A673 (cell line): ENCODE measurements at regions of chr12 and their contacts with region 1.

Region 1: DNA sequence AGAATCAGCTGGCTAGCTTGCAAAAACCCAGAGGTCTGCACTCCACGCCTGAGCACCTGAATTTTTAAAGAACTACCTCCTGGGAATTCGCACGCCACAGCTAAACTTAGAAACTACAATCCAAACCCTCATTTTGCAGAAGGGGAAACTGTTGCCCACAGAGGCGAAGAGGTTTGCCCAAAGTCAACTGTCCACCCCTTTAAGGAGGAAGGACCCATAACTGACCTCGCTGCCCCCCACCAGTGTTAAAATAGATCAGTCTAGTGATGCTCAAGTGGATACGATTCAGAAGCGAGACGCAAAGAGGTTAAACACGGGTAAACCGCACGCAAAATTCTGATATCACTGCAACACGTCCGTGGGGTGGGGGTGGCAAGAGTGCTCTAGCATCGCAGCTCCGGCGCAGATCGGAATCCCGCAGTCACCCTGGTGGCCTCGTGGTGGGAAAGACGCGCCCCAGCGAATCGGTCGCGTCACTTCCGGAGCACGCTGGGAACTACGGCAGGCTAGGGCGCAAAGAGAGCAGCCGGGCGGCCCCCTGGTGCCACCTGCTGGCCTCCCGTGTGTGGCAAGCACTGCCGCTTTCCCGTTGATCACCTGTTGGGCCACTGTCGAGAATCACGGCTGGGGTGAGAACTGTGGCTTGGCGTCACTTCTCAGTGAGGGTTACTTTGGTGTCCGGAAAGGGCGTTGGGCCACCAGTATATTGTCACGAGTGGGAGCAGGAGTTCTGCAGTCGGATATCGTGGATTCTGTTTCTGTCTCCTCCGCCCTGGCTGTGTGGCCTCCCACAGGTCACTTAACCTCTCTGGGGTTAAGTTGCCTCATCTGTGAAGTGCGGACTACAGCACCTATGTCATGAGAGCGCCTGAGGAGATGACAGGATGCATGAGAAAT is at the start of gene ALKBH2:
- DNase-seq: peak; percentile 96
- H3K4me3 ChIP-seq: peak within 1 kb of the TSS; percentile 48
- H3K27ac ChIP-seq: peak within 1 kb of the TSS; percentile 55
- H3K4me1 ChIP-seq: peaks cover 21% of the 10 kb centered on the region
- H3K27me3 ChIP-seq: no peaks in the 10 kb centered on the region
- CTCF ChIP-seq: peak; percentile 98
- total RNA-seq, gene ALKBH2: 40.6 and 44.5 TPM in 2 replicates

Region 2: GRCh38 chr12:108664338-108665258 is 428.7 kb before region 1 on chr12:
- CTCF ChIA-PET with region 1: no interaction called
- POLR2A ChIA-PET with region 1: no interaction called
- intact Hi-C with region 1: loop called (anchors 1 kb)
- DNase-seq: peak; percentile 95
- H3K4me3 ChIP-seq: no peak overlapping the region
- H3K27ac ChIP-seq: peak overlapping the region; percentile 46
- H3K4me1 ChIP-seq: peaks cover 45% of the 10 kb centered on the region
- H3K27me3 ChIP-seq: no peaks in the 10 kb centered on the region
- CTCF ChIP-seq: peak; percentile 92

Region 3: GRCh38 chr12:108856428-108857157 is 236.7 kb before region 1 on chr12:
- CTCF ChIA-PET with region 1: no interaction called
- POLR2A ChIA-PET with region 1: interaction called, 3 read pairs
- intact Hi-C with region 1: loop called (anchors 10 kb)
- DNase-seq: peak; percentile 50
- H3K4me3 ChIP-seq: peak overlapping the region; percentile 85
- H3K27ac ChIP-seq: peak overlapping the region; percentile 89
- H3K4me1 ChIP-seq: peaks cover 38% of the 10 kb centered on the region
- H3K27me3 ChIP-seq: no peaks in the 10 kb centered on the region
- CTCF ChIP-seq: no peak

Region 4: GRCh38 chr12:108950991-108951739 is 142.1 kb before region 1 on chr12:
- CTCF ChIA-PET with region 1: no interaction called
- POLR2A ChIA-PET with region 1: no interaction called
- intact Hi-C with region 1: loop called (anchors 10 kb)
- DNase-seq: peak; percentile 73
- H3K4me3 ChIP-seq: peak overlapping the region; percentile 12
- H3K27ac ChIP-seq: no peak overlapping the region
- H3K4me1 ChIP-seq: peaks cover 7% of the 10 kb centered on the region
- H3K27me3 ChIP-seq: no peaks in the 10 kb centered on the region
- CTCF ChIP-seq: peak; percentile 91